Right ventricle myocardium inferior (tissue), 1 donor: ENCODE measurements at regions of chr1 and their contacts with region 1.

Region 1: DNA sequence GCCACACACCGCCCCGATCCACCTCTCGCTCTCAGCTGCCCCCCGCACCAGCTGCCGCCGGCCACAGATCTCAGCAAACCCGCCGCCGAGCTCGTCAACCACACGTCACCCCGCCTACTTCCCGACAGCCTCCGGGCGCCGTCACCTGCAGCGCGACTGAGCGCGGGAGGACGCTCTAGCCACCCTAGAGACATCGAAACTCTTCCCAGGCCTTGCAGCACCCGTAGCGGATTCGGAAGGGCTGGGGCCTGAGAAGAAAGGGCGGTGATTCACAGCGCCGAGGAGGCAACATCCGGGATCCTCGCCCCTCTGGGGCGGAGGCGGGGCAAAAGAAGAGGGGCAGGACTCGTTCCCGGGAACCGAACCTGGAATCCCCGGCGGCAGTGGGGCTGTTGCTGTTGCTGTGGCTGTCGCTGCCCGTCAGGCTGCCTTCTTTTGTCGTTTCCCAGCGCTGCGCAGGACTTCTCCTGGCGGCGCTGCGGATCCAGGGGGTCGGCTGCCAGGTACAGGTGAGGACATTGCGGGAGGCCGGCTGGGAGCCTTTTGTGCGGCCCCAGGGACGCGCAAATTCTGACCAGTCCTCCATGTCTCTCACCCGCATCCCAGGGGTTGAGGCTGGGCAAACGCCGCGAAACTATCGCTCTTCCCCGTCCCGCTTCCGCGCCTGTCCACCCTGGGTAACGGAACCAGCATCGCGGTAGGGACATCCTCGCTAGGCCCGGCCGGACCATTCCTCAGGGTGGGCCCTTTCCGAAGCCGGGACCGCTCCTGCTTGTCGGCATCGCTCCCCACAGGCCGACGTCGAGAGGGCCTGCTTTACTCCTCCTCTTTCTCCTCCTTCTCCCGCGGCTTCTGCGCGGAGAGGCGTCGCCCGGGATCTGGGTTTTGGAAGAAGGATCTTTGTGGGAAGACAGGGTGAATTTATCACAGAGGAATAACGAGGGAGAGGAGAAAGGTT is at the starts of genes RO60 and UCHL5:
- DNase-seq: peak; percentile 97
- ATAC-seq: peak; percentile 99
- total RNA-seq, gene RO60: 42.8 TPM
- total RNA-seq, gene UCHL5: 42.9 TPM

Region 2: GRCh38 chr1:193087893-193088292 is 28.3 kb after region 1 on chr1:
- intact Hi-C with region 1: no loop called
- DNase-seq: no peak
- ATAC-seq: peak; percentile 42

Region 3: GRCh38 chr1:193121616-193122593 is 62.4 kb after region 1 on chr1 and contains the start of gene CDC73:
- intact Hi-C with region 1: loop called (anchors 5 kb)
- DNase-seq: peak; percentile 99
- ATAC-seq: peak; percentile 100
- total RNA-seq, gene CDC73: 48.6 TPM